Naive thymus-derived CD8-positive, alpha-beta T cell (primary cell): ENCODE measurements at regions of chr5 and their contacts with region 1.

Region 1: DNA sequence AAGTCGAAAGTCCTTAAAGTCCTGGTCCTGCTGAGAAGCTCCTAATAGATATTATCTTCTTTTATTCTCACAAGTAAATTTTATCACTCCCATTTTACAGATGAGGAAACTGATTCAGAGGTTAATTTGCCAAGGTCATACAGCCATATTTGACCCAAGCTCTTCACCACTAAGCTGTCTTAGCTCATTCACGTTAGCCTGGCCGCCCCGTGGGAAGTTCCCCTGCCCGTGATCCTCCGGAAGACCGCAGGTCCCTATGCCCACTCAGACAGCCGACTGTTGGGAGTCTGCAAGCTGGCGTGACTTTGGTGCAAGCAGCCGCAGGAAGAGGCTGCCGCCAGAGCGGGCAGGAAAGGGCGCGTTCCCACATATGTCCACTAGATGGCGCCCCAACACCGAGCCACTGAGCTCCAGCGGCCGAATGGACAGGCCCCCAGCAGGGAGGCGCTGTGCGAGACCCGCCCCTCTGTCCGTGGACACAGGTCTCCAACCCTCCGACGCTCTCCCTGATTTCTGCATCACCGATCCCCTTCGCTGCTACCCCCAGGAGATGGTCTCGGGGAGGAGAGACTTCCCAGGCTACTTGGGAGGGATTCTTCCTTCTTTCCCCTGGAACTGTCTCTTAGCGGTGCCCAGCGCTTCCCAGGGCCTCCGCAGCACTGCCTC is 10.0 kb upstream of the ARAP3 start:
- DNase-seq: peak; percentile 65 to 89 (median 80)
- ATAC-seq: peak; percentile 90 to 96
- H3K4me3 Mint-ChIP-seq: peak overlapping the region in 8 of 10 donors; percentile 63 to 80 (median 69)
- H3K27ac Mint-ChIP-seq: peak overlapping the region in 4 of 10 donors; percentile 9 to 72 (median 56)
- H3K4me1 Mint-ChIP-seq: peaks cover 10 to 20% (median 19%) of the 10 kb centered on the region in 4 donors
- H3K27me3 Mint-ChIP-seq: peaks cover 4 to 43% (median 14%) of the 10 kb centered on the region in 5 donors

Region 2: DNA sequence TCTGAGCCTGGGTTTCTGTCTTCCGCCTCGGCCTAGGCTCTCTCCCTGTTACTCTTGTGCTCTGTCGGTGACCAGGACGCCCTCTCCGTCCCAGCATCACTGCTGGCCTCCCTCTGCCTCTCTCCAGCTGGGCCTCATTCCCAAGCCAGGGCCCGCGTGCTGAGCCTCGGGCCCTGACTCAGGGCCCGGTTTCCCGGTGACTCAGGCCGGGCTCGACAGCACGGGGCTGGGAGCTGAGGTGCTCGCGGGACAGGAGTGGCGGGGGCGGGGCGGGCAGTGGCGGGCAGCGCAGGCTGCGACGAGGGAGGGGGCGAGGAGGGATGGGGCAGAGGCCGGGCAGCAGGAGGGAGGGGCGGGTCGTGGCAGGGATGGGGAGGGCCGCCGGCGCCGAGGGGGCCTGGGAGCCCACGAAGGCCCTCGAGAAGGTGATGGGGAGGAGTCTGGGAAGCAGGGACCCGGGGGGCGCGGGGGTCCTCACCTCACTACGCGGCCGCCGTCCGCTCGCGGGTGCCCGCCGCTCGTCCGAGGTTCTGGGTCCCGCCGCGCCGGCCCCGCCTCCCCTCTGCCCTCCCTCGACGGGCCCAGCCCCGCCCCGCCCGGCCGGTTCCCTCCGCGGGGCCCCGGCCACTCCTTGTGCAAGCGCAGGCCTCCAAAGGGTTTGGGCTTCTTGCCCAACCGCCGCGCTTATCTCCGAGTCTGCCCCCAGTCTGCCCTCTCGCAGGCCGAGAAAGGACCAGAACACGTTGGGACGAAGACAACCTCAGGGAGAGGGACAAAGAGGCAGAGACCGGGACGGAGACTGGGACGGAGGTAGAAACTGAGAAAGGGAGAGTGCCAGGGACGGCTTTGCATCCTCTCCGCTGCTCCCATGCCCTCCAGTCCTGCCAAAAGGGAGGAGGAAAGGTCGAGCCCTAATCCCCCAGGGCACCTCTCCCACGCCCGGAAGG is 10.0 kb before region 1 on chr5 and contains the start of gene ARAP3:
- POLR2A ChIA-PET with region 1: interaction called, 25 read pairs
- DNase-seq: peak in 5 of 10 donors; percentile 22 to 48 (median 41)
- ATAC-seq: peak; percentile 56 to 79
- H3K4me3 Mint-ChIP-seq: peak within 1 kb of the TSS; percentile 32 to 89 (median 83)
- H3K27ac Mint-ChIP-seq: peak within 1 kb of the TSS; percentile 42 to 95 (median 87)
- H3K4me1 Mint-ChIP-seq: peaks cover 18 to 44% (median 29%) of the 10 kb centered on the region in 4 donors
- H3K27me3 Mint-ChIP-seq: no peaks in the 10 kb centered on the region
- polyA plus RNA-seq, gene ARAP3: not detected

Region 3: DNA sequence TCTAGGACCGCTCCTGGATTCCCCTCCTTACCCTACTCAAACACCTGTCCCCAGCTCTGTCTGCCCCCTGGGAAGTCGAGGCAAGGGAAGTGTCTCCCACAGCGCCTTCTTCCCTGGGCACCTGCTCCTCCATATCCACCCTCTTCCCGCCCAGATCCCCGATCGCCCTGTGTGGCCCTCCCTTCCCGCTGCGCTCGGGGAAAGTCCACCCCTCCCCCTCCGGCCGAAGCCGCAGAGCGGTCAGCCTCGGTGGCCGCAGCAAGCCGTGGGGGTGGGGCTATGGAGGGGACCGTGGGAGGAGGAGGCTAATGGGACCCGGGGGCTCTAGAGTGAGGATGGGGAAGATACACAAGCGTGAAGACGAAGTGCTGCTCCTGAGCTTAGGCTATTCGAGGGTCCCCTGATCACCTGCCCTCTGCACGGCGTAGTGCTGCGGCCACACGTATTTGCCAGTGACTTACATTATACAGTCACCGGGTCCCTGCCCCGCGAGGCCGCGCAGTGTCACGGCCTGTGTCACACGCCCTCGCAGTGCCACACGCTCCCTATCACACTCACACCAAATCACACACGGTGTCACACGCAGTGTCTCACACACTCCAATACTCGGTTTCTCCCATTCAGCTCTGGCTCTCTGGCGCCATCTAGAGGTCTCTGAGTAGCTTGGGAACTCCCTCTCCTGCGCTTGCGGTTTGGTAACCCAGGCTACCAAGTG is 186.9 kb after region 1 on chr5:
- POLR2A ChIA-PET with region 1: interaction called, 25 read pairs
- DNase-seq: peak; percentile 74 to 95 (median 88)
- ATAC-seq: peak; percentile 85 to 90
- H3K4me3 Mint-ChIP-seq: peak overlapping the region; percentile 80 to 97 (median 82)
- H3K27ac Mint-ChIP-seq: peak overlapping the region in 8 of 10 donors; percentile 0 to 90 (median 36)
- H3K4me1 Mint-ChIP-seq: peaks cover 21 to 48% (median 31%) of the 10 kb centered on the region in 4 donors
- H3K27me3 Mint-ChIP-seq: peaks cover 42 to 90% (median 69%) of the 10 kb centered on the region in 5 donors

Region 4: GRCh38 chr5:141960449-141961202 is 268.6 kb after region 1 on chr5:
- POLR2A ChIA-PET with region 1: interaction called, 29 read pairs
- DNase-seq: peak; percentile 77 to 94 (median 89)
- ATAC-seq: peak; percentile 97 to 98
- H3K4me3 Mint-ChIP-seq: peak overlapping the region; percentile 39 to 72 (median 66)
- H3K27ac Mint-ChIP-seq: peak overlapping the region; percentile 70 to 96 (median 88)
- H3K4me1 Mint-ChIP-seq: peaks cover 25 to 53% (median 43%) of the 10 kb centered on the region in 4 donors
- H3K27me3 Mint-ChIP-seq: no peaks in the 10 kb centered on the region